ENCODE measurements at regions of chr14 and their contacts with region 1.

Region 1: GRCh38 chr14:85471727-85472126 is 58.2 kb upstream of the FLRT2 start:
- DNase-seq: peak; percentile 100
- H3K4me3 ChIP-seq: no peak overlapping the region
- H3K27ac ChIP-seq: peak overlapping the region; percentile 97
- H3K4me1 ChIP-seq: peaks cover 54% of the 10 kb centered on the region
- H3K27me3 ChIP-seq: no peaks in the 10 kb centered on the region
- CTCF ChIP-seq: no peak
- POLR2A ChIP-seq: peak; percentile 86

Region 2: DNA sequence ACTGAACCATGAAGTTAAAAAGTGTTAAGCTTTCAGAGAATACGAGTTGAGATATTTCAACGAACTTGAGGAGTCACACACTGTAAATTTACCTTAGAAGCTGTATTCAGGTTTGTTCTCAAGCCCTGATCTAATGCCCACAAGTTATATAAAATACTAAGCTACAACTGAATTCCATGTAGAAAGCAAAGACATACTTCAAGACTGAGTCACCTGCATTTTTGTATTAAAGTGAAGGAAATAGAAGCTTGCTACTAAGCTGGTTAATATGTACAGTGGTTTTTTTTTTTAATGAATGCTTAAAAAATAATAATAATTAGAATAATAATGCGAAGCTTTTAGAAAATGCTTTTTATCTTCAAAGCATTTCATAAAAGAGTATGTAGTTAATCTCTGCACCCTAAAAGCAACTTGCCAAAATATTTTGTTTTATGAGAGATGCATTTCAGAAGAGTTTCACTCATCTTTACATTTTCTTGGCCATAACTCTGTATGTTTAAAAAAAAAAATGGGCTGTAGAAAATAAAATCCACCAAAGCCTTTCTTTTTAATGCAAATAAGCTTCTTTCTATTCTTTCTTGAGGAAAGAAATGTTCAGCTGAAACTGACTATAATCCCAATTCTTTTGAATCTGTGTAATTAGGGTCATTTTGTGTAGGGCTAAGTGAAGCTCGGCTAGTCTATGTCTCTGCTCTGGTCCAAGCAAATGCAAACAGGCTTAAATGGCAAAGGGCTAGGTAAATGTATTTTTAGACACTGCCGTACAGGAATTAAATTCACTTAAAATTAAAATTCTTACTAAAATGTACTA is 989.3 kb before region 1 on chr14:
- CTCF ChIA-PET with region 1: no interaction called
- POLR2A ChIA-PET with region 1: interaction called, 5 read pairs
- dilution Hi-C with region 1: no loop called
- intact Hi-C with region 1: loop called (anchors 5 kb)
- DNase-seq: peak; percentile 71
- H3K4me3 ChIP-seq: peak overlapping the region in 1 of 3 experiments; percentile 4
- H3K27ac ChIP-seq: peak overlapping the region; percentile 78
- H3K4me1 ChIP-seq: peaks cover 33% of the 10 kb centered on the region
- H3K27me3 ChIP-seq: no peaks in the 10 kb centered on the region
- CTCF ChIP-seq: no peak
- POLR2A ChIP-seq: no peak

Region 3: DNA sequence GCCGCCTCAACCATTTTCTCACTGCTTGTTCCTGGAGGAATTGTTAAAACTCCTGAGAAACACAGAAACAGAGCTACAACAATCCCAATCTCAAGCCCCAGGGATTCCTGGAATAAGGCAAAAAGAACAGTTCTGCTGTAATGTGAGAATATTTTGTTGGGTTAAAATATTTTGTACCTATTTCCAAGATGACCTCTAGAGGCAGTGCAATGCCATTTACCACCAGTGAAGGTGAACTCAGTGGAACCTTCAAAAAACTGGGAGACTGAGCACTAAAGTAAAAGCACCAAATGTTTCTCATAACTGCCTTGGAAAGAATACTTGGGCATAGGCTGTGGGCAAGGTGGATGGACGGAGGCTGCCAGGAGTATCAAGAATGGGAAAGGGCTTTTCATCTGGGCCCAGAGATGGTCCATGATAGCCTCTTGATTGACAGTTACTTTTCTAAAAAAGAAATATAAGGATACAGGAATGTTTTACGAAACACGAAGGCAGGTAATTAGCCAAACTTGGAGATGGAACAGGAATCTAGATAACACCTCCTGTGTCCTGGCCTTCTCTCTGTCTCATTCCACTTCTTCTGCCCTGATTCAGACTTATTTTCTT is 275.8 kb before region 1 on chr14:
- CTCF ChIA-PET with region 1: no interaction called
- POLR2A ChIA-PET with region 1: no interaction called
- dilution Hi-C with region 1: no loop called
- intact Hi-C with region 1: loop called (anchors 5 kb)
- DNase-seq: peak; percentile 18
- H3K4me3 ChIP-seq: no peak overlapping the region
- H3K27ac ChIP-seq: no peak overlapping the region
- H3K4me1 ChIP-seq: no peaks in the 10 kb centered on the region
- H3K27me3 ChIP-seq: no peaks in the 10 kb centered on the region
- CTCF ChIP-seq: peak; percentile 38 to 48
- POLR2A ChIP-seq: no peak

Region 4: DNA sequence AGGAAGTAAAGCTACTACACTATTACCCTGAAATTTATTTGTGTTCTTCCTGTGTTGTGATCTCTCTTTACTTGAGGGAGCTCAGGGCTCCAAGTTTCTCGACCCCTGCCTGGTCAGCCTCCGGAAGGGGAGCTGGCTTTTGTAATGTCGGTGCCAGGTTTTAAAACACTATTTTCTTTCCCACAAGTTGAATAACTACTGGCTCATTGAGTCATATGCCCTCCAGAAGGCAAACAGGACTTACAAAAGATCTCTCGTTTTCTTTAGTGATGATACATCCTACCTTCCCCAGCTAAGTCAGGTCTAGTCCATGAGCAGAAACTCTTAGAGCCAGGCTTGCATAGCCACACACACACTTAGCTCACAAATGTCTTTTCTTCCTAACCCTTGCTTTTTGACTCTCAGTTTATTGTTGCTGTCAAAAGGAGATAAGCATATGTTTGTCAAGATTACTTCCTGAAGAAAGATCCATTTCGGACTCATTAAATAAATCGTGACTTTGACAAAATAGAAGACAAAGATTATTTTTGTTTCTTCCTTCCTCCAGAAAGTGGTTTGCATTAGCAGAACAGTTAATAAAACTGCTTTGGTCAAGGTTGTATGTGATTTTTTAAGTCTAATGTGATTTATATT is 151.6 kb before region 1 on chr14:
- CTCF ChIA-PET with region 1: interaction called, 3 read pairs
- POLR2A ChIA-PET with region 1: no interaction called
- dilution Hi-C with region 1: no loop called
- intact Hi-C with region 1: loop called (anchors 1 kb)
- DNase-seq: peak; percentile 95
- H3K4me3 ChIP-seq: peak overlapping the region in 1 of 3 experiments; percentile 35
- H3K27ac ChIP-seq: peak overlapping the region; percentile 68
- H3K4me1 ChIP-seq: peaks cover 25% of the 10 kb centered on the region
- H3K27me3 ChIP-seq: no peaks in the 10 kb centered on the region
- CTCF ChIP-seq: no peak
- POLR2A ChIP-seq: peak; percentile 35

Region 5: DNA sequence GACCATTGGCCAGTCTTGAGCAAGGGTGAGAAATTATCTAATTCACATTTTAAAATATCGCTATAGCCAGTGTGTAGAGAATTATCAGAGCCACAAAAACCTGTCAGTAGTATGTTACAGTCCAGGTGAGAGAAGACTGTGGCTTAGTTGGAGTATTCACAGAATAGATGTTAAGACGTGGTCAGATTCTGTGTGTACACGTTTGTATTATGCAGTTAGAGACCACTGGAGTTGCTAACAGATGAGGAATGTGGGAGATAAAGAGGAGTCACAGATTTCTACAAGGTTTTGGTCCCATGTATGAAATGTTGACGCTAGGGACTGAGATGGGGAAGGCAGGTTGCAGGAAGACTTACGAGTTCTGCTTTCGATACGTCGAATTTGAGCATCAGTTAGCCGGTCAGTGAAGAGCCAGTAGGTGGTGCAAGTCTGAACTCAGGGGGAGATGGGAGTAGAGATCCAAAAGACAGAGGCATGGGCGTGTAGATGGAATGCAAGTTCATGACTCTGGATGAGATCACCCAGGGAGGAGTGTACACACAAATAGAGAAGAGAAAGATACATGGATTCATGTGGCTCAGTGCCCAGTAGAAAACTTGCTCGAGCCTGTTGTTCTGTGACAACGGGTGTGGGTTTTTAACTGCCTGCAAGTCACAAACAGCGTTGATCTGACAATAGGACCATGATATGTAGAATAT is 56.6 kb before region 1 on chr14:
- CTCF ChIA-PET with region 1: interaction called, 4 read pairs
- POLR2A ChIA-PET with region 1: no interaction called
- dilution Hi-C with region 1: no loop called
- intact Hi-C with region 1: loop called (anchors 1 kb)
- DNase-seq: peak; percentile 67
- H3K4me3 ChIP-seq: no peak overlapping the region
- H3K27ac ChIP-seq: peak overlapping the region; percentile 79
- H3K4me1 ChIP-seq: peaks cover 38% of the 10 kb centered on the region
- H3K27me3 ChIP-seq: no peaks in the 10 kb centered on the region
- CTCF ChIP-seq: peak in 1 of 2 donors; percentile 28
- POLR2A ChIP-seq: no peak

Region 6: DNA sequence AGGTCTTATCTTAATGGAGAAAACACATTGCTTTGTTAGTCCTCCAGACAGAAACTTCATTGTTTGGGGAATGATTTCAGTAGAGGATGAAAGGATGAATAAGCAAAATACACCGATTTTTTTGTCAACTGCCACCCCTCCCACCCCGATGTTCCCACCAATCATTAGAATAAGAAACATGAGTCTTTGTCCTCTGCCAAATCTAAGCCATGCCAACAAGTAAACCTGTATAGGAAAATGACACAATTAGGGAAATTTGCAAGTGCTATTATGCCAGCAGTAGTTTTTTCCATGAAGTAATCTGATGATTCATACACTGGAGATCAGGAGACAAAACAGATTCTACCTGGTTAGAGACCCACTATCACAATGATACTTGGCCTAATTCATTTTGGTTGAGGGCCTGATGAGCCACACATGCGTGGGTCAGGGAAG is 94.2 kb after region 1 on chr14:
- CTCF ChIA-PET with region 1: no interaction called
- POLR2A ChIA-PET with region 1: no interaction called
- dilution Hi-C with region 1: no loop called
- intact Hi-C with region 1: loop called (anchors 1 kb)
- DNase-seq: peak; percentile 89
- H3K4me3 ChIP-seq: no peak overlapping the region
- H3K27ac ChIP-seq: peak overlapping the region; percentile 92
- H3K4me1 ChIP-seq: peaks cover 30% of the 10 kb centered on the region
- H3K27me3 ChIP-seq: no peaks in the 10 kb centered on the region
- CTCF ChIP-seq: no peak
- POLR2A ChIP-seq: peak; percentile 21

Measured in endothelial cell of umbilical vein (primary cell).